Activated T-helper 1 cell treated with anti-CD3 and anti-CD28 coated beads, Interleukin-12 subunit alpha, Interleukin-12 subunit beta, Interleukin-2, Interleukin-4 antibody, amounts not matched to agents 30 ng/mL and 10 ng/mL and 1 ng/mL, durations not matched to agents 14 hours and 24 hours and 36 hours (primary cell): ENCODE measurements at regions of chr21 and their contacts with region 1.

Region 1: DNA sequence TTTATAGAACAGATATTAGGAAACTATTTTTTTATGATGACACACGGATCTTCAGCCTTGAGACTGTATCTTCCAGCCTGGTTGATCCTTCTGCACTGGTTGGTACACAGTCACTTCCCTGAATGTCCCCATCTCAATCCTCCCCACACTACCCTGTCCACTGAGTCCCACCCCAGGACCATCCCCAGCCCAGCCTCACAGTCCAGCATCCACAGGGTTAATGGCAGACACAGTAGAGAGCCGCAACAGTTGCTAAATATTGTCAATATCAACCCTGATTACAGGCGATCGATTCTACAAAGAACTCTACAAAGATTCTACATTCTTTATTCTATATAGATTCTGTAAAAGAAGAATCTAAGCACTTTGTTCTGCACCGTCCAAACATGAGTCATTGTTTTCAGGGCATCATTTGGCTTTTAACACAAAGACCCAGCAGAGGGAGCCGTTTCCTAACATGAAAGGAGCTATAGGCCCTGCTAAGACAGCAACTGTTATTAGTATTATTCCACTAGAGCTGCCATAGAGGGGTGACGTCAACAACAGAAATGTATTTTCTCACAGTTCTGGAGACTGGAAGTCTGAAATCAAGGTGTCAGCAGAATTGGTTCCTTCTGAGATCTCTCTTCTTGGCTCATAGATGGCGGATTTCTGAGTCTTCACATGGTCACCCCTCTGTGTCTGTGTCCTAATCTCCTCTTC is 30.1 kb upstream of the IFNAR2 start:
- DNase-seq: peak; percentile 67
- H3K4me3 Mint-ChIP-seq: no peak overlapping the region
- H3K27ac Mint-ChIP-seq: no peak overlapping the region
- H3K4me1 Mint-ChIP-seq: peaks cover 27% of the 10 kb centered on the region
- H3K27me3 Mint-ChIP-seq: peaks cover 28% of the 10 kb centered on the region

Region 2: GRCh38 chr21:32940079-32941014 is 259.3 kb before region 1 on chr21:
- intact Hi-C with region 1: loop called (anchors 1 kb)
- DNase-seq: no peak
- H3K4me3 Mint-ChIP-seq: no peak overlapping the region
- H3K27ac Mint-ChIP-seq: no peak overlapping the region
- H3K4me1 Mint-ChIP-seq: peaks cover 9% of the 10 kb centered on the region
- H3K27me3 Mint-ChIP-seq: peaks cover 15% of the 10 kb centered on the region

Region 3: GRCh38 chr21:33089398-33090119 is 110.1 kb before region 1 on chr21:
- intact Hi-C with region 1: no loop called
- DNase-seq: no peak
- H3K4me3 Mint-ChIP-seq: no peak overlapping the region
- H3K27ac Mint-ChIP-seq: no peak overlapping the region
- H3K4me1 Mint-ChIP-seq: no peaks in the 10 kb centered on the region
- H3K27me3 Mint-ChIP-seq: peaks cover 12% of the 10 kb centered on the region

Region 4: DNA sequence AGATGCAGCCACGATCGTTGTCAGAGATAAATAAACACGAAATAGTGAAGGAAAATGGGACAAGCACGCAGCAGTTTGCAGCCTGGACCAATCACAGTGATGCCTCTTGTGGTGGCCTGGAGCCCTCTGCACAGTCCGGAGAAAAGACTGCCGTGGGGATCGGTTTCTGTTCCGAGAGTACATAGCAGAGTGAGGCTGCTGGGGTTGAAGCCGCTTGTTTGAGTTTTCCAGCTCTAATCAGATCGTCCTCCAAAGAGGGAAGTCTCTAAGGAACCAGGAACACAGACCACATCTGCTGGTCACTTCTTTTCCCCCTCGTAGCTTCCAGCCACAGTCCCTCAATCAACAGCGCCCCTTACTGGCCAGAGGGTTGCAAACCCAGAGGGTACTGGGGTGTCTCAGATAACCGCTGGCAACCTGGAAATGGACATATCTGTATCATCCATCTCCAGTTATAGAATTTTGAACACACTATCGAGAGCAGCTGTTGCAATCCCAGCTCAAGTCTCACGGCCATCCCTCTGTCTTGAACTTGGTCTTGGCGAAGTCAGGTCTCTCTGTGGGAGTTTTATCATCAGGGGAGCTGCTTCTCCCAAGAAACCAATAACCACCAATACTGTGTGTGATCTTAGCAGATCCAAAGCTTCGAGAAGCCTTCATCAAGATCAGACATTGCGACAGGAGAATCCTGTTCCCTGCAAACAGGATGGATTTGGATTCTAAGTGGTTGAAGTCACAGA is 72.3 kb before region 1 on chr21:
- intact Hi-C with region 1: loop called (anchors 2 kb)
- DNase-seq: peak; percentile 8
- H3K4me3 Mint-ChIP-seq: no peak overlapping the region
- H3K27ac Mint-ChIP-seq: no peak overlapping the region
- H3K4me1 Mint-ChIP-seq: peaks cover 8% of the 10 kb centered on the region
- H3K27me3 Mint-ChIP-seq: peaks cover 16% of the 10 kb centered on the region

Region 5: GRCh38 chr21:33324291-33325221 is 124.9 kb after region 1 on chr21 and contains the start of gene IFNAR1:
- intact Hi-C with region 1: loop called (anchors 1 kb)
- DNase-seq: peak; percentile 98
- H3K4me3 Mint-ChIP-seq: no peak within 1 kb of the TSS
- H3K27ac Mint-ChIP-seq: no peak within 1 kb of the TSS
- H3K4me1 Mint-ChIP-seq: peaks cover 23% of the 10 kb centered on the region
- H3K27me3 Mint-ChIP-seq: peaks cover 6% of the 10 kb centered on the region
- total RNA-seq, gene IFNAR1: 20.4 and 20.7 TPM in 2 replicates

Region 6: GRCh38 chr21:33374450-33375096 is 174.9 kb after region 1 on chr21:
- intact Hi-C with region 1: loop called (anchors 1 kb)
- DNase-seq: peak; percentile 22
- H3K4me3 Mint-ChIP-seq: no peak overlapping the region
- H3K27ac Mint-ChIP-seq: no peak overlapping the region
- H3K4me1 Mint-ChIP-seq: peaks cover 5% of the 10 kb centered on the region
- H3K27me3 Mint-ChIP-seq: peaks cover 37% of the 10 kb centered on the region

Region 7: DNA sequence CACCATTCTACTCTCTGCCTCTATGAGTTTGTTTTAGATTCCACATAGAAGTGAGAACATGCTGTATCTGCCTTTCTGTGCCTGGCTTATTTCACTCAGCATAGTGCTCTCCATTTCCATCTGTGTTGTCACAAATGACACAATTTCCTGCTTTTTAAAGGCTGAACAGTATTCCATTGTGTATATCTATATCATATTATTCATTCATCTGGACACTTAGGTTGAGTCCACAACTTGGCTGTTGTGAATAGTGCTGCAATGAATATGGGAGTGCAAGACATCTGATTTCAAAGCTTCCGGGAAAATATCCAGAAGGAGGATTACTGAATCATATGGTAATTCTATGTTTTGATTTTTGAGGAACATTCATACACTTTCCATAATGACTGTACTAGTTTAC is 408.9 kb after region 1 on chr21:
- intact Hi-C with region 1: loop called (anchors 5 kb)
- DNase-seq: no peak
- H3K4me3 Mint-ChIP-seq: no peak overlapping the region
- H3K27ac Mint-ChIP-seq: no peak overlapping the region
- H3K4me1 Mint-ChIP-seq: no peaks in the 10 kb centered on the region
- H3K27me3 Mint-ChIP-seq: no peaks in the 10 kb centered on the region